ENCODE measurements at regions of chr12 and their contacts with region 1.

Region 1: GRCh38 chr12:11798856-11799501 is 149.5 kb downstream of the ETV6 start:
- DNase-seq: no peak
- H3K4me3 Mint-ChIP-seq: no peak overlapping the region
- H3K27ac Mint-ChIP-seq: peak overlapping the region; percentile 96
- H3K4me1 Mint-ChIP-seq: peaks cover 56% of the 10 kb centered on the region
- H3K27me3 Mint-ChIP-seq: no peaks in the 10 kb centered on the region
- CTCF ChIP-seq: no peak

Region 2: DNA sequence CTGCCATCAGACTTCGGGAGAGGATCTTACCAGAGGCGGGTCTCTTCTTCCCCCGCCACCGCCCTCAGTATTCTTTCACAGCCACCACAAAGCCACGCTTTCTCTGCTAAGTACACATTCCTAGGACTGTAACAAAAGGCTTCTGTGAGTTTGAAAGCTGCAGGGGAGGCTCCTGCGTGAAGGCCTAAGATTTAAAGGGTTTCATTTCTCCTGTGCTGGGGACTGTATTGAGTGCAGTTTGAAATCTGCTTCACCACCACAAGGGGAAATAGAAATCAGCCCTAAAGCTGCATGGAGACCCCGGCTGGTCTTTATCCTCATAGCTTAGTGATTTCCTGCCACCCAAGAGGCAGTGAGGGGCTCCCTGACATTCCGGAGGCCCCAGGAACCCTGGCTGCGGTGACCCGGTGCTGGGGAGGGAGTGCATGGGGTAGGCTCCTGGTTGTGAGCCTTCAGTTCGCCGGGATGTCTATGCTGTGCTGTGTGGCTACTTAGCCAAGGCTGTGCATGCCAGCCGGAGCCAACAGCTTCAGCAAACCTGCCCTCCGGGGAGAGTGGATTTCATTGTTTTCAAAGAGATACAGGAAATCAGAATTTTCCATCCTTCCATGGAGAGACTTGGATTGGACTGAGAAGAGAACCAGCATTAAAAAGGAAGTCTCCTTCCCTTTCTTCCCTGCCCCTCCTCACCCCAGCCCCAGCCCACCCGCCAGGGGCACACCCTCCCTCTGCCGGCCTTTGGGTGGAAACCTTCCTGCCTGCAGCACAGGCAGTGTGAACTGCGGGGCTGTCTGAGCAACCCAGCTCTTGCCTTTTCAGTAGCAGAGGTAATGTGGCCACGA is 13.8 kb after region 1 on chr12:
- CTCF ChIA-PET with region 1: interaction called, 14 read pairs
- intact Hi-C with region 1: no loop called
- DNase-seq: peak; percentile 42
- H3K4me3 Mint-ChIP-seq: peak overlapping the region; percentile 71
- H3K27ac Mint-ChIP-seq: peak overlapping the region; percentile 96
- H3K4me1 Mint-ChIP-seq: peaks cover 72% of the 10 kb centered on the region
- H3K27me3 Mint-ChIP-seq: no peaks in the 10 kb centered on the region
- CTCF ChIP-seq: no peak

Region 3: GRCh38 chr12:11836282-11837151 is 37.5 kb after region 1 on chr12:
- CTCF ChIA-PET with region 1: no interaction called
- intact Hi-C with region 1: loop called (anchors 2 kb)
- DNase-seq: no peak
- H3K4me3 Mint-ChIP-seq: no peak overlapping the region
- H3K27ac Mint-ChIP-seq: no peak overlapping the region
- H3K4me1 Mint-ChIP-seq: peaks cover 86% of the 10 kb centered on the region
- H3K27me3 Mint-ChIP-seq: no peaks in the 10 kb centered on the region
- CTCF ChIP-seq: no peak